ENCODE measurements at regions of chr5 and their contacts with region 1.

Region 1: DNA sequence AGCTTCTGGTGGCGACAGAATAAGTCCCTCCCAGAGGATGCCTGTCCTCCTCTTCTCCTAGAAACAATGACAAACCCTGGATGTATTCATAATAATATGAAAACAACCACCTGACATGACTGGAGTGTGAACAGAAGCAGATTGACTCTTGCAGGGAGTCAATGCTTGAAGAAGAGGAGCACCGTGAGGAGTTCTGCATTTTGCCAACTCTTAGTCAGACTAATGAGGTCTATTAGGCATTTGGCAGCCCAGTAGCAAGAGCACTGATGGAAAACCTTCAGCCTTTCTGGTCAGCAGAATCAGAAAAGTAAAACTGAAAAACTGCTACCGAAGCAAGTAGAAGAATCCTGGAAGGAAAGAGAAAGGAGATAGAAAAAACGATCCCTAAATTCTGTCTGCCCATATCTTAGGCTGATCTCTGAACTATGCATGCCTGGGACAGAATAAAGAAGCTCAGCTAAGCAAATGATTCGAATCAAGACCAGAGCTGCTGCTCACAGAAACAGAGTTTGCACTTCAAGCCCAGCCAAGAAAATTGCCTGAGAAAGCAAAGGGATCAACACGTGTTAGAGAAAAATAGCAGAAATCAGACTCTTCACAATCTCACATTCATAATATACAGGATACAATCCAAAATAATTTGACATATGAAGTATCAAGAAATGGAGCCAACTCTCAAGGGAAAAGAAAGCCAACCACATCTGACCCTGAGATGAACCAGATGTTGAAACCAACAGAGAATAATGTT is 69.5 kb upstream of the OSMR start:
- DNase-seq: no peak
- ATAC-seq: no peak
- H3K4me3 ChIP-seq: no peak overlapping the region
- H3K27ac ChIP-seq: peak overlapping the region; percentile 55; the same call in 1 of the 2 replicates
- H3K4me1 ChIP-seq: peaks cover 6% of the 10 kb centered on the region
- H3K27me3 ChIP-seq: no peaks in the 10 kb centered on the region
- CTCF ChIP-seq: no peak

Region 2: DNA sequence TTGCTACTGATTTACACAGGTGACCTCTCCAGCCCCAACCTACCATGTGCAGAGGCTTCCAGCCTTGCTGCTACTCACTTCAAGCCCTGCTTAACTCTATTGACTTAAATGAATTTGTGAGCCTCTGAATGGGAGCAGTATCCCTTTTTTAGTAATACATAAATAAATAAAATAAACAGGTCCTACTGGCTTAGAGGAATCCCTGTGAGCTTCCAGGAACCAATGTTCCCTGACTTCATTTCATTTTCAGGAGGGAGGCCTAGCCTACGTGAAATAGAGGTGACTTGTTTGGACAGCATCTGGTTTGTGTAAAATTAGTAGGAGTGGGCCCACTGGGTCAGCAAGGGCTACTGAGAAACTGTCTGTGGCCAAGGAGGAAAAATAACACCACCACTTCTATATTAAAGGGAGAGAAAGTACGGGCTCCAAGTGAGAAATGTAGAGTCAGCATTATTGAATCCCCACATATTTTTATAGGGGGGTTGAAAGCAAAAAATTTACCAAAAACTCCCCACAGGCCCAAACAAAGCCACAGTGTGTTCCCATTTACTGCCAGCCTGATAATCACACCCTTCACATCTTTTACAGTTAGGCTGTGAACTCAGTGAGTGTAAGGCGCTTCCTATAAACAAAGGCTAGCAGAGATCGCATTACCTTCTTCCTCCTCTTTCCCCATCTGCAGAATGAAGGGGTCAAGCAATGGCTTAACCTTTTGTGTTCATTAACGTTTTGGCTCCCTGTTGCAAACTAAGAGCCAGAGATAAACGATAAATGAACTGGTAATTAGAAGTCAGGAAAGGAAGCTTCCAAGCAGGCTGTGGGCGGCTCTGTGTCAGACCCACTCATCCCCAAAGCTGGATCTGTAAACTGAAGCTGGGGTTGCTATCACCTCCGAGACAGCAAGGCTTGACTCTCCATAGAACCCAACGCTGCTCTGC is 81.0 kb before region 1 on chr5:
- CTCF ChIA-PET with region 1: no interaction called
- POLR2A ChIA-PET with region 1: no interaction called
- in situ Hi-C with region 1: no loop called
- intact Hi-C with region 1: no loop called
- DNase-seq: no peak
- ATAC-seq: no peak
- H3K4me3 ChIP-seq: no peak overlapping the region
- H3K27ac ChIP-seq: peak overlapping the region; percentile 75
- H3K4me1 ChIP-seq: peaks cover 21% of the 10 kb centered on the region
- H3K27me3 ChIP-seq: no peaks in the 10 kb centered on the region
- CTCF ChIP-seq: no peak

Region 3: DNA sequence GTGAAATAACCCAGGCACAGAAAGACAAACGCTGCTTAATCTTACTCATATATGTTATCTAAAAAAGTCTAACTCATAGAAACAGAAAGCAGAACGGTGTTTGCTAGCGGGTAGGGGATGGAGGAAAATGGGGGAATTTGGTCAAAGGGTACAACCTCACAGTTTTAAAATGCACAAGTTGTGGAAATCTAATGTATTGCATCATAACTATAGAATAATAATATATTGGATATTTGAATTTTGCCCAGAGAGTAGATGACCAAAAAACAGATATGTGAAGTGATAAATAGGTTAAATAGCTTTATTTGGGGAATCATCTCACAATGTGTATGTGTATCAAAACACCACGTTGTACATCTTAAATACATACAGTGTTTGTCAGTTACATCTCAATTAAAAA is 47.2 kb after region 1 on chr5:
- CTCF ChIA-PET with region 1: no interaction called
- POLR2A ChIA-PET with region 1: interaction called, 10 read pairs
- in situ Hi-C with region 1: no loop called
- intact Hi-C with region 1: no loop called
- DNase-seq: no peak
- ATAC-seq: no peak
- H3K4me3 ChIP-seq: no peak overlapping the region
- H3K27ac ChIP-seq: no peak overlapping the region
- H3K4me1 ChIP-seq: no peaks in the 10 kb centered on the region
- H3K27me3 ChIP-seq: no peaks in the 10 kb centered on the region
- CTCF ChIP-seq: no peak

Measured in Panc1 (cell line).